HepG2 (cell line): ENCODE measurements at regions of chr6 and their contacts with region 1.

Region 1: GRCh38 chr6:126156973-126157372 is 170.6 kb downstream of the TRMT11 start:
- DNase-seq: no peak
- ATAC-seq: no peak
- H3K4me3 ChIP-seq: no peak overlapping the region
- H3K27ac ChIP-seq: no peak overlapping the region
- H3K4me1 ChIP-seq: no peaks in the 10 kb centered on the region
- H3K27me3 ChIP-seq: no peaks in the 10 kb centered on the region
- CTCF ChIP-seq: no peak
- EP300 ChIP-seq: no peak
- POLR2A ChIP-seq: no peak
- RAD21 ChIP-seq: no peak

Region 2: GRCh38 chr6:126170978-126171382 is 14.0 kb after region 1 on chr6:
- CTCF ChIA-PET with region 1: no interaction called
- POLR2A ChIA-PET with region 1: no interaction called
- in situ Hi-C with region 1: no loop called
- intact Hi-C with region 1: no loop called
- DNase-seq: peak; percentile 52
- ATAC-seq: peak; percentile 82
- H3K4me3 ChIP-seq: no peak overlapping the region
- H3K27ac ChIP-seq: no peak overlapping the region
- H3K4me1 ChIP-seq: no peaks in the 10 kb centered on the region
- H3K27me3 ChIP-seq: no peaks in the 10 kb centered on the region
- CTCF ChIP-seq: peak; percentile 57
- EP300 ChIP-seq: no peak
- POLR2A ChIP-seq: no peak
- RAD21 ChIP-seq: peak; percentile 13; the same call in 1 of the 2 replicates

Region 3: DNA sequence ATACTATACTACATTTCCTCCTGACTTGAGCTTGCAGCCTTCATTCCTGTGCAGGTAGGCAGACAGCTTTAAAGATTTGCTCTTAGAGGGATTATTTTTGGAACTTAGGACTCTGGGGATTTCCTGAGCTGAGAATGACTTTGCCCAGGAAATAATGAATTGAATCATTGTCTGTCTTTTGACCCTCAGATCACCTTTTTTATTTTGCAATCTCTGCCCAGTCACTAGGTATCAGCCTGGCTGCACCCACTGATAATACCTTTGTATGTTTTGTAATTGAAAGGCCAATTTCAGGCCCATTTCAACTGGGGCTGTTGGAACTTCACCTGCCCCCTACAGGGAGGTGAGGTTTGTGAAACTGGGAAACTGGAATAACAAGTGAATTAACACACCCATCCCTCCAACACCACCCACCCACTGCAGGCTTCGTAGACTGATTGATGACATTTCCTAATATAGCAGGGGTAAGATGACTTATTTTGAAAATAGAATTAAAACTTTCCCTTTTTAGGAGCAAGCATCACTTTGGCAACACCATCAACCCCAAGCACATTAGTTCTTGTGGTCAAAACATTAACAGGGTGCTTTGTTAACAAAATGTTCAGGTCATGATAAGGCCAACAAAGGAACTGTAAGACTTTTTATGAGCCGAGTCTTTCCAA is 25.8 kb after region 1 on chr6:
- CTCF ChIA-PET with region 1: no interaction called
- POLR2A ChIA-PET with region 1: no interaction called
- in situ Hi-C with region 1: no loop called
- intact Hi-C with region 1: loop called (anchors 2 kb)
- DNase-seq: peak; percentile 83
- ATAC-seq: peak; percentile 89
- H3K4me3 ChIP-seq: no peak overlapping the region
- H3K27ac ChIP-seq: peak overlapping the region; percentile 6
- H3K4me1 ChIP-seq: peaks cover 25% of the 10 kb centered on the region
- H3K27me3 ChIP-seq: no peaks in the 10 kb centered on the region
- CTCF ChIP-seq: 0 out of 2 replicates have a peak, but pooled peaks have one; percentile 4
- EP300 ChIP-seq: peak in 1 of 2 experiments; percentile 56; a peak in 1 of 4 replicates
- POLR2A ChIP-seq: no peak
- RAD21 ChIP-seq: no peak

Region 4: GRCh38 chr6:126245077-126245476 is 88.1 kb after region 1 on chr6:
- CTCF ChIA-PET with region 1: no interaction called
- POLR2A ChIA-PET with region 1: no interaction called
- in situ Hi-C with region 1: no loop called
- intact Hi-C with region 1: no loop called
- DNase-seq: no peak
- ATAC-seq: no peak
- H3K4me3 ChIP-seq: no peak overlapping the region
- H3K27ac ChIP-seq: no peak overlapping the region
- H3K4me1 ChIP-seq: no peaks in the 10 kb centered on the region
- H3K27me3 ChIP-seq: no peaks in the 10 kb centered on the region
- CTCF ChIP-seq: no peak
- EP300 ChIP-seq: no peak
- POLR2A ChIP-seq: no peak
- RAD21 ChIP-seq: no peak